H1 (cell line): ENCODE measurements at regions of chr1 and their contacts with region 1.

Region 1: GRCh38 chr1:202207292-202207691 is 13.7 kb downstream of the LGR6 start:
- DNase-seq: no peak
- H3K4me3 ChIP-seq: no peak overlapping the region
- H3K27ac ChIP-seq: no peak overlapping the region
- H3K4me1 ChIP-seq: peaks cover 0 to 2% (median 0%) of the 10 kb centered on the region in 4 experiments; a peak in 1 of 7 replicates
- H3K27me3 ChIP-seq: peaks cover 0 to 2% (median 0%) of the 10 kb centered on the region in 4 experiments; a peak in 1 of 7 replicates
- CTCF ChIP-seq: peak; percentile 48 to 59 (median 51)
- EP300 ChIP-seq: no peak
- POLR2A ChIP-seq: no peak
- RAD21 ChIP-seq: peak; percentile 32 to 48; a peak in 3 of 4 replicates

Region 2: DNA sequence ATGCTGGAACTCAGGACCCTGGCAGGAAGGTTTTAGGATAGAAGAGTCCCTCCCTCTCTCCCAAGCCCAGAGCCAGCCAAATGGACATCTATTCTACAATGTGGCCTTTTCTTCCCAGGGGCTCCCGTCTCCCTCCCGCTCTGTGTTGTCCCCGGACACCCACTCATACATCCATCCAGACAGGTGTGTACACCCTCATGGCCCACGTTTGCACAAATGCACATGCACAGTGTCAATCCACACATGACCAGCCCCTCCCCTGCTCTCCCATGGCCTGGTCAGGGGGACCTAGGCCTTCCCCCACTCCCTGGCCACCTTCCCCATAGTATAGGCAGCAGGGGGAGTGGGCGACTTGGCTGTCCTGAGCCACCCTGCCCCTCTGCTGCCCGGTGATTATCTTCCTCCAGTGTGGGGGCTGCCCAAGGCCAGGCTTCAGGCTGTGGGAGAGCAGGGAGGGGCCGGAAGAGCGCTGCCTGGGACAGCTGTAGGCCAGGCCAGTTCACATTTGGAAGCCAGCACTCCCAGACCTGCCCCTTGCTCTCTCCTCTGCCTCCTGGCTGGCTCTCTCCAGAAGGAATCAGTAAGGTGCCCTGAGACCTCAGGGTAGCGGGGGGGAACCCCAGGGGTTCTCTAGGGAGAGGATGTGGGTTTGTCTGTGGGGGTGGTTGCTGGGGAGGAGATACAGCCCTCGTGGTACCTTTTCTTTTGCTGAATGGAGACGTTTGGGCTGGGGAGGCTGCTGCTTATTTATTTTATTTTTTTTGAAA is 42.8 kb before region 1 on chr1:
- CTCF ChIA-PET with region 1: no interaction called
- POLR2A ChIA-PET with region 1: no interaction called
- DNase-seq: no peak
- H3K4me3 ChIP-seq: no peak overlapping the region
- H3K27ac ChIP-seq: no peak overlapping the region
- H3K4me1 ChIP-seq: peaks cover 2 to 25% (median 14%) of the 10 kb centered on the region in 4 experiments
- H3K27me3 ChIP-seq: no peaks in the 10 kb centered on the region
- CTCF ChIP-seq: no peak
- EP300 ChIP-seq: no peak
- POLR2A ChIP-seq: no peak
- RAD21 ChIP-seq: no peak

Region 3: DNA sequence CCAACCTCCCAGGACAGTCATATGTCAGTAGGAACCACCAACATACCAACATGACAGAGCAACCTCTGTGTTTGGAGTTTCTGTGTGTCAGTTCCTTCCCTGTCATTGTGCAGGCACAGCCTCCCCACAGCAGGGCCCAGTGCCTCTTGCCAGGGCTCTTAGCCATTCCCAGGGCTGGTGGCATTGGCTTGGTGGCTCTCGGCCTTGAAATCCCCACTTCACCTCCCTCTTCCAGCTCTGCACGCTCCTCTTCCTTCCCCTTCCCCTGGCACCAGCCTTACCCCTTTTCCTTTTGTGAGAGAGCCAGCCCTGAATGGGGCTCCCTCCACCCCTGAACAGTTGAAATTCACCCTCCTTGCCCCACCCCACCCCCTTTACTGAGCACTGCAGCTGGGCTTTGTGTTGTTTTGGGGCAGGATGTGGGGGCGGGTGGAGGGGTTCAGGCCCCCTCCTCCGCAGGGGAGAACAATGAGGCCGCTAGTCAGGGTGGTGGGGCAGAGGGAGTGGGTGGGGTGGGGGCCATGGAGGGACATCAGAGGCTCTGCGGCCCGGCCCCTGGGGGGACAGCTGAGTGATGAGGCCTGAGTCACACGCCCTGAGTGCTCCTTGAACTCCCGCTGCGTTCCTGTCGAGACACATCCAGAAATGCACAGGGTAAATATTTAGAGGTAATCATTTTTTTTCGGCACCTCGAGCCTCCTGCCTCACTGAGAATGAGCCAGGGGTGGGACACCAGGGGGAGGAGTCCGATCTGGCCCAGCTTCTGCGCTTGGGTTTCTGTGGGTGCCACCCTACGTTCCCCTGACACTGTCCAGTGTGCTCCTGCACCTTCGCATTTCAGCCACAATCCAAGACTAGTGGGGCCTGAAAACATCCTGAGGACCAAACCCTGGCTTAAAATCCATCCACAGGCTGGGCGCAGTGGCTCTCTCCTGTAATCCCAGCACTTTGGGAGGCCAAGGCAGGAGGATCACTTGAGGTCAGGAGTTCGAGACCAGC is 14.9 kb after region 1 on chr1:
- CTCF ChIA-PET with region 1: interaction called, 150 read pairs
- POLR2A ChIA-PET with region 1: no interaction called
- DNase-seq: no peak
- H3K4me3 ChIP-seq: no peak overlapping the region
- H3K27ac ChIP-seq: no peak overlapping the region
- H3K4me1 ChIP-seq: peaks cover 0 to 7% (median 1%) of the 10 kb centered on the region in 4 experiments; a peak in 3 of 7 replicates
- H3K27me3 ChIP-seq: no peaks in the 10 kb centered on the region
- CTCF ChIP-seq: no peak
- EP300 ChIP-seq: no peak
- POLR2A ChIP-seq: no peak
- RAD21 ChIP-seq: no peak

Region 4: GRCh38 chr1:202365092-202365815 is 158.0 kb after region 1 on chr1:
- CTCF ChIA-PET with region 1: no interaction called
- POLR2A ChIA-PET with region 1: no interaction called
- DNase-seq: no peak
- H3K4me3 ChIP-seq: no peak overlapping the region
- H3K27ac ChIP-seq: no peak overlapping the region
- H3K4me1 ChIP-seq: peaks cover 2 to 14% (median 11%) of the 10 kb centered on the region in 4 experiments
- H3K27me3 ChIP-seq: no peaks in the 10 kb centered on the region
- CTCF ChIP-seq: no peak
- EP300 ChIP-seq: no peak
- POLR2A ChIP-seq: no peak
- RAD21 ChIP-seq: no peak